AG04450 (cell line): ENCODE measurements at regions of chr1 and their contacts with region 1.

Region 1: DNA sequence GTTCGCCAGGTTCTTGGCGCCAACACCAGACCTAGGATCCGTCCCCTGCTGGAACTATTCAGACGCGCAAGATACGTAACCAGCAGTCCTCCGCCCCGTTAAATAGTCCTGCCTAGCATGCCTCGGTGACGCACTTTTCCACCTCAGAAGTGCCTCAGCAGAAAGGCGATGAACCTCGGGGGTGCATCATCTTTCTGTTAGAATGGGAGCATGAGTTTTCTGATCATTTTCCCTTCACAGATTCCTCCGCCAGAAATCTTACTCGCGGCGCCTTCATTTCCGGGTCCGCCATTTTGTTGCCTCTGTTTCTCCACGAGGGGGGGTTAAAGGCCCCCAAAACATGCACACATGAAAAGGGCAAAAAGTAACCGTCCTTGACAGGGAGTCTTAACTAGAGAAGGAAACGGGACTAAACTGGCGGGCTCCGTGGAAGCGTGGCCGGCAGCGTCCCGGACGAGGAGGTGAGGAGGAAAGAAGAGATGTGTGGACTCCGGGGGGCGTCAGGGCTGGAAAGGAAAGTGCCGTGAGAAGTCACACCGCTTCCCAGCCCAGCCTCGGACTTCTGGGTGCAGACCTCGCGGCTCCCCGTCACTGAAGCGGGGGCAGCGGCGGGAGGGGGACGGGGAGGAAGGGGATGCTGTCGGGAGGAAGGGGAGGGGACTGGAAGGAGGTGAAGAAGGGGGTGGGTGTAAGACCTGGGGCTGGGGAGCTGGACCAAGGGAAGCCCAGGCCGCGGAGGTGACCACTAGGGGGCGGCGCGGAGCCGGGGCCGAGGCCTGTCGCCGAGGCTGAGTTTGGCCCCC is at the start of gene GABPB2:
- DNase-seq: peak; percentile 93
- H3K4me3 ChIP-seq: peak within 1 kb of the TSS; percentile 79
- H3K27ac ChIP-seq: peak within 1 kb of the TSS; percentile 99
- H3K27me3 ChIP-seq: no peaks in the 10 kb centered on the region
- CTCF ChIP-seq: peak; percentile 88
- polyA plus RNA-seq, gene GABPB2: 9.8 and 10.0 TPM in 2 replicates

Region 2: DNA sequence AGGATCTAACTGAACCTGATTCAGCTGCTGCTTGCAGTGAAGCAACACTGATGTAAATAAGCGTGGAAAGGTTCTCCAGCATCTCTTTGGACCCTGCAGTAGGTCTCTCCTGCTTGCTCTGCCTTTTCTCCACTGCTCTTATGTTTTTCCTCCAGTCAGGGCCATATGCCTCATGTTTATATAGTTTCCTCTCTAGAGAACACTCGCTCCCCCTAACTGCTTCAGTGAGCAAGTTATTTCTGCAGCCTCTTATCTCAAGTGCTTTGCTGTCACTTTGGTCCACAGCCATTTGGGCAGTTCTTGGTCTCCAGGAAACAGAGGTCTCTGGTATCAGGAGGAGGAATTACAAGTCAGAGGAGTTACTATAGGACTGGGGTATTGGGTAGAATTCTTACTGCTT is 57.2 kb before region 1 on chr1:
- CTCF ChIA-PET with region 1: no interaction called
- POLR2A ChIA-PET with region 1: no interaction called
- DNase-seq: no peak
- H3K4me3 ChIP-seq: no peak overlapping the region
- H3K27ac ChIP-seq: no peak overlapping the region
- H3K27me3 ChIP-seq: no peaks in the 10 kb centered on the region
- CTCF ChIP-seq: peak; percentile 21; the same call in 1 of the 2 replicates

Region 3: DNA sequence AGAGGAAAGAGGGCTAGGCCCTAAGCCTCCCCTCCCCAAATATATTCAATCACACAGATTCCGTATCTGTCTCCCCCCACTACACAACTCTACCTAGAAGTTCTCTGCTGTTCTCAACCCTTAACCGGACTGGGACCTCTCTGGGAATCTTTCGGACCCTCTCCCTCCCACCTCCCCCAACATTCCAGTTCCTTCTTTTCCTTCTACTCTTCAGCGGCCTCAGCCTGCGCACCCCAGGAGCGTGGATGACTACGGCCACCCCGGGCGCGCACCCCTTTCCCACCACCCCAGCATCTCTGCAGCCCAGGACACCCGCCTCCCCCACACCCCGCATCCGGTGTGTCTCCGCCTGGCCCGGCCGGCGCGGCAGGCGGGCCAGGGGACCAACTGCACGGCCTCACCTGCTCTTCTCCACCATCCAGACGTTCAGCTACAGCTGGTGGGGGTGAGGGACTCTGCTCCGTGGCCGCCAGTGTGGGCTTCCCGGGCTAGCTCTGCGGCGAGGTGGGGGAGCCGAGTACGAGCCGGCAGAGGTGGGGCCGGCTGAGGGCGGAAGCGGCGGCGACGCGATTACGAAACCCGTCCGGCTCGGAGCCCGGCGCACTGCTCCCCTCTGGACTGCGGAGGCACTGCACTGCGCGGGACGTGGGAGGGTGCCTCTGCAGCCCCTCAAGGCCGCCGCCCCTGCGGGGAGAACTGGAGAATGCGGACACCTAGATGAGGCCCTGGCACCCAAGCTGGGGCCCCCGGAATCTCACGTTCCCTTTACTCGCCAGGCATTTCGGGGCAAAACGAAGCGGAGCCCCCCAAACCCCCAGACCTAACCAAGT is 11.4 kb before region 1 on chr1 and contains the start of gene CDC42SE1:
- CTCF ChIA-PET with region 1: interaction called, 11 read pairs
- POLR2A ChIA-PET with region 1: interaction called, 6 read pairs
- DNase-seq: peak; percentile 45
- H3K4me3 ChIP-seq: peak within 1 kb of the TSS; percentile 84
- H3K27ac ChIP-seq: peak within 1 kb of the TSS; percentile 92
- H3K27me3 ChIP-seq: no peaks in the 10 kb centered on the region
- CTCF ChIP-seq: peak; percentile 76
- polyA plus RNA-seq, gene CDC42SE1: 66.3 and 70.3 TPM in 2 replicates

Region 4: GRCh38 chr1:151085953-151086559 is 15.4 kb after region 1 on chr1:
- CTCF ChIA-PET with region 1: interaction called, 10 read pairs
- POLR2A ChIA-PET with region 1: no interaction called
- DNase-seq: no peak
- H3K4me3 ChIP-seq: no peak overlapping the region
- H3K27ac ChIP-seq: no peak overlapping the region
- H3K27me3 ChIP-seq: no peaks in the 10 kb centered on the region
- CTCF ChIP-seq: no peak